A549 (cell line): ENCODE measurements at regions of chr4 and their contacts with region 1.

Region 1: DNA sequence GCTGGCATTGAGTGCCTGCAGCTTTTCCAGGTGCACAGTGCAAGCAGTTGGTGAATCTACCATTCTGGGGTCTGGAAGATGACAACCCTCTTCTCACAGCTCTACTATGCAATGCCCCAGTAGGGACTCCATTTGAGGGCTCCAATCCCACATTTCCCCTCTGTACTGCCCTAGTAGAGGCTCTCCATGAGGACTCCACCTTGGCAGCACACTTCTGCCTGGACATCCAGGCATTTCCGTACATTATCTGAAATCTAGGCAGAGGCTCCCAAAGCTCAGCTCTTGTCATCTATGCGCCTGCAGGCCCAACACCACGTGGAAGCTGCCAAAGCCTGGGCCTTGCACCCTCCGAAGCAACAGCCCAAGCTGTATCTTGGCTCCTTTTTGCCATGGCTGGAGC is 8.4 kb upstream of the SMAD1 start:
- DNase-seq: no peak
- ATAC-seq: no peak
- H3K4me3 ChIP-seq: no peak overlapping the region
- H3K27ac ChIP-seq: no peak overlapping the region
- H3K4me1 ChIP-seq: no peaks in the 10 kb centered on the region
- CTCF ChIP-seq: no peak
- EP300 ChIP-seq: no peak
- POLR2A ChIP-seq: no peak
- RAD21 ChIP-seq: no peak

Region 2: DNA sequence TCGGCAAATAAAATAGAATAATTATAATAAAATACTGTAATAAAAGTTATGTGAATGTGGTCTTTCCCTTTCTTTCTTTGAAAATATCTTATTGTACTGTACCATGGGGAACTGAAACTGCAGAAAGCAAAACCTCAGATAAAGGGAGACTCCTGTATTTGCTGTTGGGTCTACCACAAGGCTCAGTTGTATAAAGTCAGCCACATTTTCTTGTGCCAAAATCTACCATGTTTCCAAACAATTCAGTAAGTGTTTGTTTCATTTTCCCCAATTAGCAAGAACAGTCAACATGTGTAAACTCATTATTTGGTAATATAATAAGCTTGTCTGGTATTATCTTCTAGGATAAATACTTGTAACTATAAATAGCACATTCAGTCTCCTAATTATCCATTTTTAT is 278.0 kb before region 1 on chr4:
- CTCF ChIA-PET with region 1: no interaction called
- POLR2A ChIA-PET with region 1: interaction called, 16 read pairs
- DNase-seq: no peak
- ATAC-seq: no peak
- H3K4me3 ChIP-seq: no peak overlapping the region
- H3K27ac ChIP-seq: no peak overlapping the region
- H3K4me1 ChIP-seq: no peaks in the 10 kb centered on the region
- CTCF ChIP-seq: no peak
- EP300 ChIP-seq: no peak
- POLR2A ChIP-seq: no peak
- RAD21 ChIP-seq: no peak